Astrocyte of the cerebellum (primary cell): ENCODE measurements at regions of chr16 and their contacts with region 1.

Region 1: DNA sequence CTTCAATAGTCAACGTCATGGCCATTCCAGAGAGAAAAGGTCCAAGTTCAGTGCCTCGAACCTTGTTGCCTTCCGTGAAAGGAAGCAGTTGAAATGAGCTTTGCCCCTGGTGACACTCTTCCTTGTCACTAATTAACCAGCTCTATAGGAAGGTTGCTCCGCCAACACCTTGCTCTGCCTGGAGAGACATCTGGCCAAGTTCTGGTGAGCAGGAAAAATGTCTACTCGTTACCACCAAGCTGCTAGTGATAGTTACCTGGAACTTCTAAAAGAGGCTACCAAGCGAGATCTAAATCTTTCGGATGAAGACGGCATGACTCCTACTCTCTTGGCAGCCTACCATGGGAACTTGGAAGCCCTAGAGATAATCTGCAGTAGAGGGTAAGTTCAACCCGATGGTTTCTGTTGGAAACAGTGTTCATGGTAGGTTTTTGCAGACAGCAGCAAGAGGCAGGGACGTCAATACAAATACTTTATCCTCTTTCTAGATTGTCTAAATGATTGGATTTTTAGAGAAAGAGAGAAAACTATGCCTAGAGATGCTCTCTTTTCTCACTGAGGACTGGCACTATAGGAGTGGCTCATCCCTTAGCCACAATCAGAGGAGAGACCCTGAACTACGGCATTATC is at the start of gene ANKS4B:
- DNase-seq: no peak
- H3K4me3 ChIP-seq: no peak within 1 kb of the TSS
- CTCF ChIP-seq: no peak

Region 2: GRCh38 chr16:21265104-21265837 is 31.6 kb after region 1 on chr16:
- in situ Hi-C with region 1: loop called (anchors 5 kb)
- DNase-seq: no peak
- H3K4me3 ChIP-seq: no peak overlapping the region
- CTCF ChIP-seq: no peak

Region 3: DNA sequence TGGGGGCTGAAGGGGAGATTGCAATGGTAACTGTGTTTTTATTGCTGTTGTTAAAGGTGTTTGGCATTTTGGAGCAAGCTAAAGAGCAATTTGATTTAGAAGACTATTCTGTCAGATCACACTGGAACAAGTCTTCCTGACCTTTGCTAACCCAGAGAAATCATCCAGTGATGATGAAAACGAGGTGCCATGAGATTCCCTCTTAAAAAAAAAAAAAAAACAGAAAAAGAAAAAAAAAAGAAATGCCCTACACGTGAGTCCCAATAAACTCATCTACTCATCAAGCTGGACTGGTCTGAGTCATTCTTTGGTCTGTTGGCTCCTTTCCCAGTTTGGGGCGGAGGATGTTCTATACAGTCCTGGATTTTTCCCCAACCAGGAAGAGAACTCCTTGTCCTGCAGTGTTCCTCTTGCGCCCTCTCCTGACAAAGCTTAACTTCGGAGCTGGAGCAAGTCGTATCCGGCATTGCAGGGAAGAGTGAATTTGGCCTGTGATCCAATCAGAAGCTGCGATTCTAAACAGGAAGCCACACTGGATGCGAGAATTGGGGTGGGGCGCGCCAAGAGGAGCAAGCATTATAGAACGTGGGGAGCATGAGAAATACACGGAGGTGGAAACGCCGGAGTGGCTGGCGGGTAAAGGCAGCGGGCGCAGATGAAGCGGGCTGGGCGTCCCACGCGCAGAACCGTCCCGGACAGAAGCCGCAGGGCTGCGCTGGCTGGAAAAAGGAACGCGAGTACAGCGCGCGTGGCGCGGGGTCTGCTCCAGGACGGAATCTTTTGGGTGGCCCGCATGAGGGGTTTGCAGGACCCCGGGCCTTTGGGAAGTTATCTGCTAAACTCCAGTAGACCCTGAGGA is 66.9 kb after region 1 on chr16:
- in situ Hi-C with region 1: no loop called
- DNase-seq: peak; percentile 100
- H3K4me3 ChIP-seq: peak overlapping the region; percentile 62
- CTCF ChIP-seq: peak; percentile 95

Region 4: DNA sequence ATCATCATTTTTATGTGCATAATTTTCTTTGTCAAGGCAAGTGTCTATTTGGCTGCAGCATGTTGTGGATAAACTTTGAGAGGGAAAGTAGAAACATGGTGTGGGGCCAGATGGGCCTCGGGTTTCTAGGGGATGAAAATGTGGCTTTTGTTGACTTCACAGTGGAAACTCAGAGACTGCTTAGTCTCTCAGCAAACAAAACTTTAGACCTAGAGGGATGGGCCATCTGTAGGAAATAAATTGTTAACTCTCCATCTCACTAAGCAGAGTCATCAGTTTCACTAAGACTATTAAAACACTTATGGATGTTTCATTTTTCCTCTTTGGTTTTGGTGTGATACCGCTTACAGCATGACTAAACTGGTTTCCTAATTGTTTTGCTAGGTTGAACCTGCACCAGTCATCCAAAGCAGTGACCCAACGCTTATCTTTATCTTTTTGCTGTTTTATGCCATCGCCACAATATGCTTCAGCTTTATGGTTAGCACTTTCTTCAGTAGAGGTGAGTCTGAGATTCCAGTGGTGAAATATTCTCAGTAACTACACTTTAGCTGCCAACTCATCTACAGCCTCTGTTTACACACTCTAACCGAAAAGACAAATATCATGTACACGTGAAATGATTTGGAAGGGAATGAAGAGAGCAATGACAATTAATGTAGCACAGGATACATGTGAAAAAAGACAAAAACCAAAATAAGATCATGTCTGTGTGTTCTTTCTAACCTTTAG is 105.1 kb after region 1 on chr16:
- in situ Hi-C with region 1: loop called (anchors 5 kb)
- DNase-seq: no peak
- H3K4me3 ChIP-seq: no peak overlapping the region
- CTCF ChIP-seq: no peak

Region 5: GRCh38 chr16:22641131-22641628 is 1407.5 kb after region 1 on chr16:
- in situ Hi-C with region 1: loop called (anchors 10 kb)
- DNase-seq: no peak
- H3K4me3 ChIP-seq: no peak overlapping the region
- CTCF ChIP-seq: no peak